ENCODE measurements at regions of chr21 and their contacts with region 1.

Region 1: DNA sequence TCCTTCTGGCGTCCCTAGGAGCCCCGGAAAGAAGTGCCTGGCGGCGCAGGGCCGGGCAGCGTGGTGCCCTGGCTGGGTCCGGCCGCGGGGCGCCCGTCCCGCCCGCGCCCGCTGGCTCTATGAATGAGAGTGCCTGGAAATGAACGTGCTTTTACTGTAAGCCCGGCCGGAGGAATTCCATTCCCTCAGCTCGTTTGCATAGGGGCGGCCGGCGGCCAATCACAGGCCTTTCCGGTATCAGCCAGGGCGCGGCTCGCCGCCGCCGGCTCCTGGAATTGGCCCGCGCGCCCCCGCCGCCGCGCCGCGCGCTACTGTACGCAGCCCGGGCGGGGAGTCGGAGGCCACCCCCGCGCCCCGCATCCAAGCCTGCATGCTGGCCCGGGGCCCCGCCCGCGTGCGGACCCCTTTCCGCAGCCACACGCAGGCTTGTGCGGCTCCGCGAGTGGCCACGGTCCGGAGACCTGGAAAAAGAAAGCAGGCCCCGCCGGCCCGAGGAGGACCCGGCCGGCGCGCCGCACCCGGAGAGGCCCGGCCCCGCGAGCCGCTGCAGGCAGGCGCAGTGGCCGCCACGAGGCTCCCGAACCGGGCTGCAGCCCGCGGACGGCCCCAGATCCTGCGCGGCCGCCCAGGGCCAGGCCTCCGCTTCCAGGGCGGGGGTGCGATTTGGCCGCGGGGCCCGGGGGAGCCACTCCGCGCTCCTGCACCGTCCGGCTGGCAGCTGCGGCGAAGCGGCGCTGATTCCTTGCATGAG is 160.4 kb downstream of the RUNX1 start:
- DNase-seq: peak; percentile 95
- H3K4me3 Mint-ChIP-seq: peak overlapping the region; percentile 96
- H3K27ac Mint-ChIP-seq: peak overlapping the region; percentile 99
- H3K4me1 Mint-ChIP-seq: peaks cover 34% of the 10 kb centered on the region
- H3K27me3 Mint-ChIP-seq: peaks cover 2% of the 10 kb centered on the region

Region 2: GRCh38 chr21:34722684-34723300 is 166.0 kb before region 1 on chr21:
- intact Hi-C with region 1: no loop called
- DNase-seq: peak; percentile 72
- H3K4me3 Mint-ChIP-seq: no peak overlapping the region
- H3K27ac Mint-ChIP-seq: no peak overlapping the region
- H3K4me1 Mint-ChIP-seq: peaks cover 7% of the 10 kb centered on the region
- H3K27me3 Mint-ChIP-seq: peaks cover 10% of the 10 kb centered on the region

Region 3: DNA sequence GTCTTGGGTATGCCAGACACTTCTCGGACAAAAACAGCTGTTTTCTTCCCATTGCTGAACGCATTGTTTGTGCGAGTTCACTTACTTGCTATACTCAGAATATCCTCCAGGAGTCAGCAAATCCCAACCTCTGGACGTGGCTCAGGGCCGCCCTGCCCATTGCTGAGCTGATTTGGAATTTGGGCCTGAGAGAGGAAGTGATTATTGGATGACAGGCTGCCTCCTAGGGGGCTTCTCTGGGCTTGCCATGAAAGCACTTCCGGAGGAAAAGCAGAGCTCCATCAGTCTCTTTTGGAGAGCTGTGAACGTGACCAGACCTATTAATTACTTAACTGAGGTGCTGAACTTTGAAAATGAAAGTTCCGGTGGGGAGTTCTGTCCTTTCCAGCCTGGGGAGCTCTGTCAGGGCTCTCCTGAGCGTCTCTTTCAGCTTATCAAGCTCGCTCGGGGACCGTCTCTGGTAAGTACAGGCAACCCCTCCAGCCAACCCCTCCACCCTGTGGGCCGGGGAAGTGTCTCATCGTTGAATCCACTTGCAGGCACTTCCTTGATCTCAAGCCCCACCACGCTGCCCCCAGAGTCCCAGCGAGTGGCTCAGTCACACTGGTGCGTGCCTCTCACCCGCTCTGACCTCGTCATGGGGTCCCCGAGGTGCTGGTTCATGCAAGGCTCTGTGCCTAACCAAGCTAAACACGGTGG is 143.0 kb before region 1 on chr21:
- intact Hi-C with region 1: loop called (anchors 5 kb)
- DNase-seq: peak; percentile 87
- H3K4me3 Mint-ChIP-seq: peak overlapping the region; percentile 52
- H3K27ac Mint-ChIP-seq: no peak overlapping the region
- H3K4me1 Mint-ChIP-seq: peaks cover 3% of the 10 kb centered on the region
- H3K27me3 Mint-ChIP-seq: peaks cover 18% of the 10 kb centered on the region

Region 4: DNA sequence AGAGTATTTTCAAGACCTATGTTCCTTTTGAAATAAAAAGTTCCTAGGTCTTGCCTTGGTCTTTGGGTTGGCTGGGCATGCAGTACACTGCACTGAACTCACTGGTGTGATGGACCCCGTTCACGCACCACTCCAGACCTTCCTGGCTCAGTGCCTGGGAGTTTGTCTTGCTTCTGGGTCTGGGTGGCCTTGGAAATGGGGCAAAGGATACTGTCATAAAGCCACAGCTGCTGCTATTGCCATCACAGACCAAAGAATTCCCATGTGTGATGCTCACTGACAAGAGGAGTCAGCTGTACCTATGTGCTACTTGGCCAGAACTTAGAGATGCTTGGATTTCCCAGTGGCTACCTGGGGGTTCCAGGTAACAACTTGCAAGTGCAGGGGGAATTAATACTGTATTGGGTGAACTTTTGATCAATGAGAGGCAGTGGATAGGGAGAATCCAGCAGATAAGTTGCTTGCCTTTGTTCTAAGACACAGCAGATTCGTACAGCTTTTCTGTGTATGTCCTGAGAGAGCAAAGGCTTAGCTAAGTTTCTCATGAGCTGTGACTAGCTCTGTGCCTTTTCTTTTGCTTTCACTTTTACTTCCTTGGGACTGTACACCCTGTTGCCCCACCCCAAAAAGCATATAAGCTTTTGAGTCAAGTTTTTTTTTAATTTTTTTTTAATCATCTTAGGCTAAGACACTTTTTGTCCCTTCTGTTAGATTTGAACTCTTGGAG is 45.0 kb after region 1 on chr21:
- intact Hi-C with region 1: loop called (anchors 2 kb)
- DNase-seq: peak; percentile 83
- H3K4me3 Mint-ChIP-seq: peak overlapping the region; percentile 78
- H3K27ac Mint-ChIP-seq: peak overlapping the region; percentile 85
- H3K4me1 Mint-ChIP-seq: peaks cover 72% of the 10 kb centered on the region
- H3K27me3 Mint-ChIP-seq: no peaks in the 10 kb centered on the region

Region 5: GRCh38 chr21:34986561-34987500 is 98.1 kb after region 1 on chr21:
- intact Hi-C with region 1: loop called (anchors 1 kb)
- DNase-seq: peak; percentile 90
- H3K4me3 Mint-ChIP-seq: peak overlapping the region; percentile 86
- H3K27ac Mint-ChIP-seq: peak overlapping the region; percentile 97
- H3K4me1 Mint-ChIP-seq: peaks cover 85% of the 10 kb centered on the region
- H3K27me3 Mint-ChIP-seq: no peaks in the 10 kb centered on the region

Region 6: GRCh38 chr21:35088319-35088771 is 199.6 kb after region 1 on chr21:
- intact Hi-C with region 1: loop called (anchors 2 kb)
- DNase-seq: no peak
- H3K4me3 Mint-ChIP-seq: no peak overlapping the region
- H3K27ac Mint-ChIP-seq: peak overlapping the region; percentile 96
- H3K4me1 Mint-ChIP-seq: peaks cover 30% of the 10 kb centered on the region
- H3K27me3 Mint-ChIP-seq: no peaks in the 10 kb centered on the region

Region 7: DNA sequence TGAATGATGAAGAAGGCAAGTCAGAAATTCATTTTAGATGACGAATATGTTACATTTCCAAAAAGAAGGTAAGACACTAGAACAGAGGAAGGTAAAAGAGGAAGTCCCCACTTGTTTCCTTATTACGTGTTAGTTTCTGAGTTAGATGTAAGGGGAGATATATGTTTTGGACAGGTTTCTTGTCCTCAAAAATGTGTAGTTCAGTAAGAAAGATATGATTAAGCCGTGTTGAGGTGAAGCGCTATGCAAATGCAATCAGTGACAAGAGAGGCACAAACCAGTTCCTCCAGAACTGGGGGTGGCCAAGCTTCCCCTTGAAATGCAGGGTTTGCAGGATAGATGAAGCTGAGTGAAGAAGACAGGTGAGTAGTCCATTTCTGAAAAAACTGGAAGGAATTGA is 453.7 kb after region 1 on chr21:
- intact Hi-C with region 1: loop called (anchors 2 kb)
- DNase-seq: no peak
- H3K4me3 Mint-ChIP-seq: peak overlapping the region; percentile 53
- H3K27ac Mint-ChIP-seq: peak overlapping the region; percentile 88
- H3K4me1 Mint-ChIP-seq: peaks cover 41% of the 10 kb centered on the region
- H3K27me3 Mint-ChIP-seq: no peaks in the 10 kb centered on the region

Region 8: GRCh38 chr21:35528116-35529042 is 639.6 kb after region 1 on chr21:
- intact Hi-C with region 1: loop called (anchors 5 kb)
- DNase-seq: peak; percentile 82
- H3K4me3 Mint-ChIP-seq: peak overlapping the region; percentile 86
- H3K27ac Mint-ChIP-seq: peak overlapping the region; percentile 94
- H3K4me1 Mint-ChIP-seq: peaks cover 49% of the 10 kb centered on the region
- H3K27me3 Mint-ChIP-seq: no peaks in the 10 kb centered on the region

Measured in activated CD4-positive, alpha-beta T cell treated with anti-CD3 and anti-CD28 coated beads, Interleukin-2, amount 10 ng/mL, durations not matched to agents 24 days and 14 days (primary cell).